OCI-LY7 (cell line): ENCODE measurements at regions of chr1 and their contacts with region 1.

Region 1: GRCh38 chr1:116257341-116257767 is 115.7 kb upstream of the ATP1A1 start:
- DNase-seq: peak; percentile 97
- H3K4me3 ChIP-seq: peak overlapping the region; percentile 24
- H3K27ac ChIP-seq: peak overlapping the region; percentile 93
- H3K4me1 ChIP-seq: peaks cover 90% of the 10 kb centered on the region
- CTCF ChIP-seq: no peak

Region 2: GRCh38 chr1:116182019-116182714 is 75.2 kb before region 1 on chr1:
- CTCF ChIA-PET with region 1: no interaction called
- POLR2A ChIA-PET with region 1: no interaction called
- intact Hi-C with region 1: no loop called
- DNase-seq: no peak
- H3K4me3 ChIP-seq: no peak overlapping the region
- H3K27ac ChIP-seq: no peak overlapping the region
- H3K4me1 ChIP-seq: no peaks in the 10 kb centered on the region
- CTCF ChIP-seq: no peak

Region 3: GRCh38 chr1:116226017-116226416 is 31.3 kb before region 1 on chr1:
- CTCF ChIA-PET with region 1: interaction called, 3 read pairs
- POLR2A ChIA-PET with region 1: interaction called, 7 read pairs
- intact Hi-C with region 1: loop called (anchors 2 kb)
- DNase-seq: peak; percentile 61
- H3K4me3 ChIP-seq: peak overlapping the region; percentile 15
- H3K27ac ChIP-seq: peak overlapping the region; percentile 45
- H3K4me1 ChIP-seq: peaks cover 72% of the 10 kb centered on the region
- CTCF ChIP-seq: no peak

Region 4: GRCh38 chr1:116273042-116273783 is 15.9 kb after region 1 on chr1:
- CTCF ChIA-PET with region 1: no interaction called
- POLR2A ChIA-PET with region 1: no interaction called
- intact Hi-C with region 1: no loop called
- DNase-seq: no peak
- H3K4me3 ChIP-seq: no peak overlapping the region
- H3K27ac ChIP-seq: no peak overlapping the region
- H3K4me1 ChIP-seq: peaks cover 4% of the 10 kb centered on the region
- CTCF ChIP-seq: no peak

Region 5: GRCh38 chr1:116372587-116373444 is 115.5 kb after region 1 on chr1 and contains the start of gene ATP1A1:
- CTCF ChIA-PET with region 1: no interaction called
- POLR2A ChIA-PET with region 1: interaction called, 11 read pairs
- intact Hi-C with region 1: loop called (anchors 1 kb)
- DNase-seq: peak; percentile 96
- H3K4me3 ChIP-seq: peak within 1 kb of the TSS; percentile 74
- H3K27ac ChIP-seq: peak within 1 kb of the TSS; percentile 70
- H3K4me1 ChIP-seq: peaks cover 38% of the 10 kb centered on the region
- CTCF ChIP-seq: 0 out of 2 replicates have a peak, but pooled peaks have one; percentile 17
- total RNA-seq, gene ATP1A1: 66.8 and 74.4 TPM in 2 replicates

Region 6: DNA sequence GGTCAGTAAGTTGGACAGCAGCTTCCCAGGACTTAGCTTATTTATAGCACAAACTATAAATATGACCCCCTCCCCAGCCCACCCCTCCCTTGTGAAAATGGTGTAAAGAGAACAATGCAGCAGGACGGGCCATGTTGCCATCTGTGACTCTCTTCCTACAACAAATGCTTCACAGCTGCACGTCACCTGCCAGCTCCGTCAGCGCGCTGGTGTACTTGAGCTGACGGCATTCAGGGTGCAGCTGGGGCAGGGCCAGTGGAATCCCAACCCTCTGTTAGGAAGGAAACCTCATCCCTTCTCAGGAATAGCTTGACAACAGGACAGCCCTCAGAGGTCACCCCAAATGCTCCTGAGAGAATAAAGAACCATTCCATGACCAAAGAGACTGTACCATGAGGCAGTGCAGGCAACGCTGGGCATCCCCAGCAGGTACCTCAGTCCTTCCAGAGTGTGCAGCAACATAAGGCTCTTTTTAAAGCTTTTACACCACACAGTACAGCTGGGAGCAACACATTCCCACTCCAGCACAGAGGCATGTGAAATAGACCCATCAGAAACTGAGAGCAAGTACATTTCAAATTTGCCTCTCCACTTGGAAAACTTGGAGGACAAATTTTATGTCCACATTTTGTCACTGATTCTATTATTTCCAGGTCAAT is 200.7 kb after region 1 on chr1:
- CTCF ChIA-PET with region 1: no interaction called
- POLR2A ChIA-PET with region 1: no interaction called
- intact Hi-C with region 1: no loop called
- DNase-seq: no peak
- H3K4me3 ChIP-seq: no peak overlapping the region
- H3K27ac ChIP-seq: no peak overlapping the region
- H3K4me1 ChIP-seq: no peaks in the 10 kb centered on the region
- CTCF ChIP-seq: no peak